Activated T-helper 1 cell treated with anti-CD3 and anti-CD28 coated beads, Interleukin-12 subunit alpha, Interleukin-12 subunit beta, Interleukin-2, Interleukin-4 antibody, amounts not matched to agents 30 ng/mL and 10 ng/mL and 1 ng/mL, durations not matched to agents 14 hours and 24 hours and 36 hours (primary cell): ENCODE measurements at regions of chr7 and their contacts with region 1.

Region 1: GRCh38 chr7:87628780-87629569 is 777 bp downstream of the RUNDC3B start:
- DNase-seq: no peak
- H3K4me3 Mint-ChIP-seq: peak overlapping the region; percentile 72
- H3K27ac Mint-ChIP-seq: no peak overlapping the region
- H3K4me1 Mint-ChIP-seq: peaks cover 6% of the 10 kb centered on the region
- H3K27me3 Mint-ChIP-seq: peaks cover 29% of the 10 kb centered on the region

Region 2: DNA sequence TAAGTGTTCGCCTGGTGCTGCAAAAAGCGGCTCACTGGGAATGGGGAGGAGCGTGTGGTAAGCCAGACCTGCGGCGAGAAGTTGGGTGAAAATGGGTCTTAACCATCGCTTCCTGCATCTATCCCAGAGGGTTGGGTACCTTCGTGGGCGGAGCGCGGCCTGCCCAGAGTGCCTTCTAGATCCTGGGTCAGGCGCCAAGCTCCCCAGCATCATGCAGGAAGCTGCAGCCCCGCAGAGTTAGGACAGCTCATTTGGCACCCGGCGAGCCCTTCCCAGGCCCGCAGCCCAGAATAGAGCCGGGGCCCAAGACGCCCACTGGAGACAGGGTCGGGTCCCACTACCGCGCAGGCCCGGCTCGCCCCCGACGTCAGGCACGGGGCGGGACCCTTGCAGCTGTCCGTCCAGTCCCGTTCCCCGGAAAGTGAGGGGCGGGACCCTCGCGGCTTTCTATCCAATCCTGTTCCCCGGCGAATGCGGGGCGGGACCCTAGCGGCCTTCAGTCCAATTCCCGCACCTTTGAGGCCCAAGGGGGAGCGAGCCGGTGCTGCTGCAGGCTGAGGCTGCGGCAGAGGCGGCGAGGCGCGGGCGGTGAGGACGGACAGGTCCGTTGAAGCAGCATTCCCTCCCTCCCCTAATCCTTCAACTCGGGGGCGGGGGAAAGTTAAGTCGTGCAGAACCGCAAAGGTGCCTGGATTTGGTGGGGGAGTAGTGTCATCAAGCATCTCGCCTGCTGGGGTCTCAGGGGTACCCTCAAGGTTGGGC is 283.6 kb before region 1 on chr7 and contains the start of gene CROT:
- intact Hi-C with region 1: loop called (anchors 1 kb)
- DNase-seq: peak; percentile 93
- H3K4me3 Mint-ChIP-seq: peak within 1 kb of the TSS; percentile 92
- H3K27ac Mint-ChIP-seq: peak within 1 kb of the TSS; percentile 89
- H3K4me1 Mint-ChIP-seq: peaks cover 57% of the 10 kb centered on the region
- H3K27me3 Mint-ChIP-seq: peaks cover 1% of the 10 kb centered on the region
- total RNA-seq, gene CROT: 5.9 and 6.5 TPM in 2 replicates

Region 3: GRCh38 chr7:87600130-87601124 is 28.5 kb before region 1 on chr7 and contains the start of gene ABCB1:
- intact Hi-C with region 1: loop called (anchors 1 kb)
- DNase-seq: peak; percentile 25
- H3K4me3 Mint-ChIP-seq: peak within 1 kb of the TSS; percentile 89
- H3K27ac Mint-ChIP-seq: peak within 1 kb of the TSS; percentile 5
- H3K4me1 Mint-ChIP-seq: peaks cover 31% of the 10 kb centered on the region
- H3K27me3 Mint-ChIP-seq: peaks cover 24% of the 10 kb centered on the region
- total RNA-seq, gene ABCB1: 3.3 and 3.6 TPM in 2 replicates

Region 4: DNA sequence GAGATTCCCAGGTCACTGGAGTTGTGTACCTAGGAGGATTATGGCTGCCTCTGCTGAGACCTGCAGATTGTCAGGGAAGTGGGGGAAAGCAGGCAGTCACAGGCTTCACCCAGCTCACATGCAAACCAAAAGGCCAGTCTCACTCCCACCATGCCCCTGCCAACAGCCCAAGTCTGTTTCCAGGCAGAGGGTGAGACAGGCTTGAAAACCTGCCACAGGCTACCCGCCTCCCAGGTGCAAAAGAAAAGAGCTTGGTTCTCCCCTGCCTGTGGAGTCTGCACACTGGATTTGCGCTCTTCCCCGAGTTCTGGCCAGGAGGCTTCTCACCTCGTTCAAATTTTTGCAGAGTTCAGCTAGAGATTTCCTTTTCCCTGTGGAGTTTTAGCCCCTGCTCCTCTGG is 118.7 kb after region 1 on chr7:
- intact Hi-C with region 1: no loop called
- DNase-seq: no peak
- H3K4me3 Mint-ChIP-seq: no peak overlapping the region
- H3K27ac Mint-ChIP-seq: no peak overlapping the region
- H3K4me1 Mint-ChIP-seq: no peaks in the 10 kb centered on the region
- H3K27me3 Mint-ChIP-seq: no peaks in the 10 kb centered on the region

Region 5: DNA sequence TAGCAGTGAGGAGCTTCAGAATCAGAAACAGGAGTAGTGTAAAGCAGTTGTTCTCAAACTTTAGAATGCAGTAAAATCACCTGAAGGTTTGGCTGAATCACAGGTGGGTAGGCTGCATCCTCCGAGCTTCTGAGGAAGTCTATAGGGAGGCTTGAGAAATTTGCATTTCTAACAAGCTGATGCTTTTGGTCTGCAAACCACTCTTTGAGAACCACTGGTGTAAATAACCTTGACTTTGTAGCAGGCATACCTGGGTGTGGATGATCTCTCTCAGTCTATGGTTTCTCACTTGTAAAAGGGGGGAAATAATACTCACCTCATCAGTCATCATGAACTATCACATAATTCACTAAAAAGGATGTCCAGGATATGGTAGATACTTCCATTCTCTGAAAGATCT is 472.8 kb after region 1 on chr7:
- intact Hi-C with region 1: loop called (anchors 10 kb)
- DNase-seq: no peak
- H3K4me3 Mint-ChIP-seq: no peak overlapping the region
- H3K27ac Mint-ChIP-seq: no peak overlapping the region
- H3K4me1 Mint-ChIP-seq: peaks cover 4% of the 10 kb centered on the region
- H3K27me3 Mint-ChIP-seq: no peaks in the 10 kb centered on the region